Activated B cell treated with CpG ODN at 0.5 μM for 24 hours (primary cell): ENCODE measurements at regions of chr5 and their contacts with region 1.

Region 1: GRCh38 chr5:59390074-59390659 is 503.4 kb downstream of the PDE4D start:
- DNase-seq: no peak
- ATAC-seq: no peak
- H3K4me3 Mint-ChIP-seq: no peak overlapping the region
- H3K27ac Mint-ChIP-seq: no peak overlapping the region
- H3K4me1 Mint-ChIP-seq: peaks cover 14% of the 10 kb centered on the region
- H3K27me3 Mint-ChIP-seq: no peaks in the 10 kb centered on the region
- CTCF ChIP-seq: peak; percentile 75

Region 2: DNA sequence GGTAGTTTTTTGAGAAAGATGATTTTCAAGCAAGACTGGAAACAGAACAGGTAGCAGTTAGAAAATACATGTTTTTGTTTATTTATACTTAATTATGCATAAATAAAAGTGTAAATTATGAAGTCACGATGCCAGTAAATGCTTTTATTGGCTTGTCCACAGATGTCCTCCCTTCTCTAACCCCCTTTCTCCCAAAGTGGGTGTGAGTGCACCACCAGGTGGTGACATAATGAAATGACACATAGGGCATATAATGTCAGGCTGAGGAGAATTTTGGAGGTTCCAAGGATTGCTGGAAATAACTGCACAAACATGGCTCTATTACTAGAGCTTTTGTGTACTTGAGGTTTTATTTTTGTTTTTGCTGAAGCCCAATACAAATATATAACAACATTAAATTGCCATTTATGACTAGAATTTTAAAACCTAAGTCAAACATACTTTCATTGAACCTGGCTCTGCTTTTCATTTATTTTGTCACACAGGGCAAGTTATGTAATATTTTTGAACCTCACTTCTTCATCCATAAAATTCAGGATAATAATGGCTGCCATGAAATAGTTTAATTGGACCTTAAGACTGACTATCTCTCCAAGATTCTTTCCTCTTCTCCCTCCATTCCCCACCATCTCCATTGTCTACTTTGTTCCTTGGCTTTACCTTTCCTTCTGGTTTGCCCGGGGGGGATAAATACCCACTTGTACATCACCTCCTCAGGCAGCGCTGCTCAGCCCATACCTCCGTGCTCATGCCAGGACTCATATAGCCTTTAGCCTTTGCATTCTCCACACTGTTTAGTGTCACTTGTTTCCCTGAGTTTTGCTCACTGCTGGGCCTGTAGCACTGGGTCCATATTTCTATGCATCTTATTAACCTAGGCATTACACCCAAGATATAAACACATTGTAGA is 334.6 kb after region 1 on chr5:
- CTCF ChIA-PET with region 1: interaction called, 4 read pairs
- POLR2A ChIA-PET with region 1: no interaction called
- intact Hi-C with region 1: loop called (anchors 1 kb)
- DNase-seq: no peak
- ATAC-seq: peak; percentile 75
- H3K4me3 Mint-ChIP-seq: no peak overlapping the region
- H3K27ac Mint-ChIP-seq: no peak overlapping the region
- H3K4me1 Mint-ChIP-seq: peaks cover 13% of the 10 kb centered on the region
- H3K27me3 Mint-ChIP-seq: no peaks in the 10 kb centered on the region
- CTCF ChIP-seq: peak; percentile 38

Region 3: GRCh38 chr5:60668686-60669304 is 1278.6 kb after region 1 on chr5:
- CTCF ChIA-PET with region 1: interaction called, 3 read pairs
- POLR2A ChIA-PET with region 1: no interaction called
- intact Hi-C with region 1: loop called (anchors 5 kb)
- DNase-seq: no peak
- ATAC-seq: no peak
- H3K4me3 Mint-ChIP-seq: no peak overlapping the region
- H3K27ac Mint-ChIP-seq: no peak overlapping the region
- H3K4me1 Mint-ChIP-seq: no peaks in the 10 kb centered on the region
- H3K27me3 Mint-ChIP-seq: no peaks in the 10 kb centered on the region
- CTCF ChIP-seq: peak; percentile 25